Activated naive CD8-positive, alpha-beta T cell treated with anti-CD3 and anti-CD28 coated beads, Interleukin-2, amount 10 ng/mL, durations not matched to agents 7 days and 5 days (primary cell): ENCODE measurements at regions of chr3 and their contacts with region 1.

Region 1: GRCh38 chr3:179147873-179148615 is at the start of gene PIK3CA:
- DNase-seq: peak; percentile 81
- ATAC-seq: peak; percentile 84
- H3K4me3 Mint-ChIP-seq: peak within 1 kb of the TSS; percentile 90
- H3K27ac Mint-ChIP-seq: peak within 1 kb of the TSS; percentile 89
- H3K4me1 Mint-ChIP-seq: peaks cover 28% of the 10 kb centered on the region
- H3K27me3 Mint-ChIP-seq: peaks cover 12% of the 10 kb centered on the region
- total RNA-seq, gene PIK3CA: 23.0 to 28.6 TPM

Region 2: GRCh38 chr3:179071550-179072397 is 76.3 kb before region 1 on chr3 and contains the start of gene ZMAT3:
- POLR2A ChIA-PET with region 1: interaction called, 15 read pairs
- DNase-seq: peak; percentile 86
- ATAC-seq: peak; percentile 86
- H3K4me3 Mint-ChIP-seq: peak within 1 kb of the TSS; percentile 97
- H3K27ac Mint-ChIP-seq: peak within 1 kb of the TSS; percentile 93
- H3K4me1 Mint-ChIP-seq: peaks cover 23% of the 10 kb centered on the region
- H3K27me3 Mint-ChIP-seq: no peaks in the 10 kb centered on the region
- total RNA-seq, gene ZMAT3: 21.1 to 21.9 TPM

Region 3: DNA sequence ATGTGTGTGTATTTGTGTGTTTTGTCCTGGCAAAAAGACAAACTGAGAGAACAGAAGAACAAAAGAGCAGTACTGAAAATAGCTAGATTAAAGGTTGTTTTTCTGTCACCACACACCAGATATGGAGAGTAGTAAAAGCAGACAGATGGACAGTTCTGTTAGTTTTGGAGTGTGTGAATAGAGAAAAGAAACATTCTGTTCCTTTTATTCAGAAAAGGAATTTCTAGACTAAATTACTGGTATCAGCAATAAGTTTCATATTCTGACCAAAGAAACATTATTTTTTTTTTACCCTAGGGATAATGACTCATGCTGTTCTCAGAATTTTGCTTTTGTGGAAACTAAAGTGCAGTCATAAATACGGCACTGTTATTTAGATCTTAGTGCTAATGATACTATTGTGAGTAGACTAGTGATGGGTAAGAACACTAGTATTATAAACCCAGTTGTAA is 33.0 kb after region 1 on chr3:
- POLR2A ChIA-PET with region 1: no interaction called
- DNase-seq: no peak
- ATAC-seq: peak; percentile 77
- H3K4me3 Mint-ChIP-seq: no peak overlapping the region
- H3K27ac Mint-ChIP-seq: no peak overlapping the region
- H3K4me1 Mint-ChIP-seq: peaks cover 25% of the 10 kb centered on the region
- H3K27me3 Mint-ChIP-seq: no peaks in the 10 kb centered on the region

Region 4: DNA sequence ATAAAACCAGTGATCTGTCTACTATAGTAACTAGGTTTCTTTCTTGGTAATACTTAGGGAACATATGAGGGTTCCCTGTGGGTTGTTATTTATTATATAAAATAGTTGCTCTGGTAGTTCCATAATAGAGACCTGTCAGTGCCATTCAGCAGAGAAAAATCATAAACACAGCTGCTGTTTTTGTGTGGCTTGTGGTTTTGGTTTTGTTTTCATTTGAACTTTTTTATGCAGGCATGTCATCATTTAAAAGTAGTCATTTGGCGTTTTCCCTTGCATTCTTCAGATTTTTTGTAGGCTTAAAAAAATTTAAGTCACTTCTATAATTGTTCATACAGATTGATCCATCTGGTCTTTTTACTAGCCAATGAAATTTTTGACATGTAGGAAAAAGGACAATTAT is 48.1 kb after region 1 on chr3:
- POLR2A ChIA-PET with region 1: no interaction called
- DNase-seq: no peak
- ATAC-seq: peak; percentile 52
- H3K4me3 Mint-ChIP-seq: no peak overlapping the region
- H3K27ac Mint-ChIP-seq: no peak overlapping the region
- H3K4me1 Mint-ChIP-seq: peaks cover 14% of the 10 kb centered on the region
- H3K27me3 Mint-ChIP-seq: no peaks in the 10 kb centered on the region

Region 5: DNA sequence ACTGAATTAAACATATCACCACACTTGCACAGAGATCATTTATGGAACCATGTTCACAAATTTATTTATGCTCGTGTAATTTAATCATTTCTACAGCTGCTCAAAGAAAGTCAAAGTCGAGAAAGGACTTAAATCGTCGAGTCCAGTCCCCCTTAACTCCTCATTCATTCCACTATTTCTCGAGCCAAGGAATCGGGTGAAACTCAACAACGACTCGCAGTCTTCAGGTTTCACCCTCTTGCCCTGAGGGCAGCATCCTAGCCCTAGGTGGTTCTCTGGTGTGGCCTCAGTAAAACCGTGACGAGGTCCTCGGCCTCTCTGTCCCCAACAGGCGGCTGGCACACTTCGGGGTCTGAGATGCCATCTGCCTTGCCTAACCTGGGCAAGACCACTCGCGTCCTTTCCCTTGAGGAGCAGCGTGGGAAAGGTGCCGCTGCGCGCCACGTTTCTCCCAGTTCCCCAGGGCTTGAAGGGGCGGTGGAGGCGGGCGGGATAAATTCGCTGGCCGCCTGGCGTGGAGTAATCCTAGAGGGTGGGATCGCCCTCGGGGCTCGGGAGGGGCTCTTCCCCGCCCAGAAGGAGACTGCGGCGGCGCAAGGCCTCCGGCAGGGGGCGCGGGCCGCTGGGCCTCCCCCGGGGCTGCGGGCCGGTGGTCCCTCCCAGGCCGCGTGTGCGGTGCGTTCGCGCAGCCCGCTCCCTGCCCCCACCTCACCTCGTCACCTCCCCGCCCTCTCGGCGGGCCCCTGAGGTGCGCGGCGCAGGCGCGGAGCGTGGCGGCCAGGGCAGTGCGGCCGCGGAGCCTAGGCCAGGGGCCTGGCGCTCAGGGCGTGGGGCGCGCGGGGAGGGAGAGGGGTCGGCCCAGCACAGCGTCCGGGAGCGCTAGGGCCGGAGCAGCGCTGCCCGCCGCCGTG is 174.5 kb after region 1 on chr3 and contains the start of gene ZNF639:
- POLR2A ChIA-PET with region 1: interaction called, 23 read pairs
- DNase-seq: peak; percentile 91
- ATAC-seq: peak; percentile 87
- H3K4me3 Mint-ChIP-seq: peak within 1 kb of the TSS; percentile 90
- H3K27ac Mint-ChIP-seq: peak within 1 kb of the TSS; percentile 92
- H3K4me1 Mint-ChIP-seq: peaks cover 22% of the 10 kb centered on the region
- H3K27me3 Mint-ChIP-seq: no peaks in the 10 kb centered on the region
- total RNA-seq, gene ZNF639: 36.2 to 38.9 TPM